Natural killer cell (primary cell): ENCODE measurements at regions of chr3 and their contacts with region 1.

Region 1: GRCh38 chr3:136075218-136075808 is 109.8 kb downstream of the PPP2R3A start:
- DNase-seq: peak; percentile 58 to 89
- ATAC-seq: peak; percentile 85 to 88 (median 86)
- H3K4me3 ChIP-seq: no peak overlapping the region
- H3K4me3 Mint-ChIP-seq: no peak overlapping the region
- H3K27ac ChIP-seq: no peak overlapping the region
- H3K27ac Mint-ChIP-seq: no peak overlapping the region
- H3K4me1 ChIP-seq: no peaks in the 10 kb centered on the region
- H3K4me1 Mint-ChIP-seq: peaks cover 0 to 8% of the 10 kb centered on the region in 2 donors
- H3K27me3 ChIP-seq: no peaks in the 10 kb centered on the region
- H3K27me3 Mint-ChIP-seq: peaks cover 3 to 4% of the 10 kb centered on the region in 2 donors
- CTCF ChIP-seq: peak; percentile 99

Region 2: GRCh38 chr3:136250226-136250902 is 175.1 kb after region 1 on chr3 and contains the start of gene PCCB:
- intact Hi-C with region 1: loop called (anchors 1 kb)
- DNase-seq: peak; percentile 87 to 94
- ATAC-seq: peak; percentile 93 to 98 (median 94)
- H3K4me3 ChIP-seq: peak within 1 kb of the TSS; percentile 58
- H3K4me3 Mint-ChIP-seq: peak within 1 kb of the TSS; percentile 90
- H3K27ac ChIP-seq: peak within 1 kb of the TSS; percentile 63
- H3K27ac Mint-ChIP-seq: peak within 1 kb of the TSS; percentile 90 to 93
- H3K4me1 ChIP-seq: peaks cover 14% of the 10 kb centered on the region
- H3K4me1 Mint-ChIP-seq: peaks cover 20 to 30% of the 10 kb centered on the region in 2 donors
- H3K27me3 ChIP-seq: no peaks in the 10 kb centered on the region
- H3K27me3 Mint-ChIP-seq: no peaks in the 10 kb centered on the region
- CTCF ChIP-seq: peak; percentile 89
- total RNA-seq, gene PCCB: 17.7 to 19.9 (median 17.8) TPM

Region 3: GRCh38 chr3:136390574-136390973 is 315.3 kb after region 1 on chr3:
- intact Hi-C with region 1: loop called (anchors 2 kb)
- DNase-seq: no peak
- ATAC-seq: no peak
- H3K4me3 ChIP-seq: no peak overlapping the region
- H3K4me3 Mint-ChIP-seq: no peak overlapping the region
- H3K27ac ChIP-seq: no peak overlapping the region
- H3K27ac Mint-ChIP-seq: no peak overlapping the region
- H3K4me1 ChIP-seq: no peaks in the 10 kb centered on the region
- H3K4me1 Mint-ChIP-seq: no peaks in the 10 kb centered on the region
- H3K27me3 ChIP-seq: no peaks in the 10 kb centered on the region
- H3K27me3 Mint-ChIP-seq: no peaks in the 10 kb centered on the region
- CTCF ChIP-seq: no peak

Region 4: DNA sequence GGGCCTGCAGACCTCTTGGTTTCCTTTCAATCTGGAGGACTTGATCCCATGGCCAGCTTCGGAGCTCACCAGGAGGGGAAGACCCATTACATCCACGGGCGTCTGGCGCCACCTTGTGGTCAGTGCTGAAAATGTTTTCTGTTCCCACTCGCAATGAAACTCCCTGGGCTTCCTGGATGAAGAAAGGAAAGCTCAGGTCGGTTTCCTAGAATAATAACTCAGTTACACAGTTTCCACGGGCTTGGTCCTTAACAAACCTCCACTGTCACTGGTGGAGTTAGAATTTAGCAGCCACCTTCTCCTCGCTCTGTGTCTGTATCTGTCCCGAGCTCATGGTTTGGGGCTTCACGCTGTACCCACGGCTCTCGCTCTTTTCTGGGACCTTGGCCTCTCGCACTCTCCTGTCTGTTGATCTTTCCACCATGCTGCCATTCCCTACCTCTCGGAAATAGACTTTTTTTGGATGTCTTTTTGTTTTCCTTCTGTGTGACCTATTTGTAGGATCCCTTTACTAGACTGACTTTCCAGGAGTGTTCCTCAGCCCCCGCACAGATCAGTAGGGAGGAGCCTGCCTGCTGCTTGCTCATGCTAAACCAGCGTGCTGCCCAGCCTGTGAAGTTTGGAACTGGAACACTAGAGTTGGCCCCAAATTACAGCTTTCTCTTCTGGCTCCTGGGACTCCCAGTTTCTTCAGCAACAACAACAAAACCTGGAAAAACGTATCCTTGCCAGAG is 938.8 kb after region 1 on chr3:
- intact Hi-C with region 1: loop called (anchors 1 kb)
- DNase-seq: peak; percentile 81 to 91
- ATAC-seq: peak; percentile 86 to 97 (median 96)
- H3K4me3 ChIP-seq: peak overlapping the region; percentile 7
- H3K4me3 Mint-ChIP-seq: peak overlapping the region; percentile 67
- H3K27ac ChIP-seq: no peak overlapping the region
- H3K27ac Mint-ChIP-seq: peak overlapping the region in 1 of 2 donors; percentile 85
- H3K4me1 ChIP-seq: peaks cover 10% of the 10 kb centered on the region
- H3K4me1 Mint-ChIP-seq: peaks cover 10% of the 10 kb centered on the region in 2 donors
- H3K27me3 ChIP-seq: no peaks in the 10 kb centered on the region
- H3K27me3 Mint-ChIP-seq: no peaks in the 10 kb centered on the region
- CTCF ChIP-seq: peak; percentile 93